ENCODE measurements at regions of chr12 and their contacts with region 1.

Region 1: GRCh38 chr12:2004113-2004929 is at the start of gene DCP1B:
- DNase-seq: peak; percentile 93
- H3K4me3 Mint-ChIP-seq: peak within 1 kb of the TSS; percentile 97
- H3K27ac Mint-ChIP-seq: peak within 1 kb of the TSS; percentile 96
- H3K4me1 Mint-ChIP-seq: peaks cover 16% of the 10 kb centered on the region
- H3K27me3 Mint-ChIP-seq: peaks cover 6% of the 10 kb centered on the region
- total RNA-seq, gene DCP1B: 9.2 and 10.2 TPM in 2 replicates

Region 2: DNA sequence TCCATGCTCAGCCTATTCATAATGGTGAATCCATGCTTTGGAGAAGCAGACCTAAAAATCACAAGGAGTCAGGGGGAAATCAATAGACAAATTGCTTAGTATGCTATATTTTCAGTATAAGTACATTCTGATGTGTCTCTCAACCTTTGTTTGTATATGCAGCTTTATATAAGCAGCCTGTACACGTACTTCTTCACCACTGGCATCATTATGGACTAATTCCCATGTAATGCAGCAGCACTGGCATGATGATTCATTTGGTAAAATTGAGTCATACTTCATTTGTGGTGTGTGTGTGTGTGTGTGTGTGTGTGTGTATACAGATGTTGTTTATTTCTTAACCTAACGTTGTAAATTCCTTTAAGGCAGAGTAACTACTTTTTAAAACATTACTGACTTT is 11.0 kb before region 1 on chr12:
- intact Hi-C with region 1: loop called (anchors 1 kb)
- DNase-seq: no peak
- H3K4me3 Mint-ChIP-seq: no peak overlapping the region
- H3K27ac Mint-ChIP-seq: no peak overlapping the region
- H3K4me1 Mint-ChIP-seq: peaks cover 30% of the 10 kb centered on the region
- H3K27me3 Mint-ChIP-seq: no peaks in the 10 kb centered on the region

Measured in activated T-helper 2 cell treated with anti-CD3 and anti-CD28 coated beads, Interferon-gamma antibody, Interleukin-2, Interleukin-4, amounts not matched to agents 10 μg/mL and 5 μg/mL and 100 μg/mL, durations not matched to agents 14 hours and 24 hours and 36 hours (primary cell).